AG04450 (cell line): ENCODE measurements at regions of chr4 and their contacts with region 1.

Region 1: DNA sequence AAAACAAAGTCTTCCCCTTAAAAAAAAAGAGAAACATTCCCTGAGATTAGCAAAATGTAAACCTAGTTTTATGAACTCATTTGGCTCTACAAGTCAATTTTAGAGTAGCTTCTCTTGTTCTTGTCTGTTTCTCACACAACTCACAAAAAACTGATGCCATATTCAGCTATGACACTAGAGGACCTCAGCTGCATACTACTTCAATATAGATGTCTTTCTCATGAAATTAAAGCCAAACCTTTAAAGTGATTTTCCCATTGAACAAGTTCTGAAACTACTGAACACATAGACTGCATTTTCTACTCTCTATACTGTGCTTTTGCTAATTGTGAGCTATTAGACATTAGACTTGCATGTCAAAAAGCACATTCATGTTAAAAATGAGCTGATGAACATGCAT is 49.8 kb downstream of the TBCK start:
- DNase-seq: peak; percentile 18
- H3K4me3 ChIP-seq: no peak overlapping the region
- H3K27ac ChIP-seq: no peak overlapping the region
- H3K27me3 ChIP-seq: no peaks in the 10 kb centered on the region
- CTCF ChIP-seq: peak; percentile 76

Region 2: GRCh38 chr4:106287353-106287969 is 21.3 kb after region 1 on chr4:
- CTCF ChIA-PET with region 1: interaction called, 11 read pairs
- POLR2A ChIA-PET with region 1: no interaction called
- DNase-seq: peak; percentile 67
- H3K4me3 ChIP-seq: no peak overlapping the region
- H3K27ac ChIP-seq: no peak overlapping the region
- H3K27me3 ChIP-seq: no peaks in the 10 kb centered on the region
- CTCF ChIP-seq: no peak

Region 3: DNA sequence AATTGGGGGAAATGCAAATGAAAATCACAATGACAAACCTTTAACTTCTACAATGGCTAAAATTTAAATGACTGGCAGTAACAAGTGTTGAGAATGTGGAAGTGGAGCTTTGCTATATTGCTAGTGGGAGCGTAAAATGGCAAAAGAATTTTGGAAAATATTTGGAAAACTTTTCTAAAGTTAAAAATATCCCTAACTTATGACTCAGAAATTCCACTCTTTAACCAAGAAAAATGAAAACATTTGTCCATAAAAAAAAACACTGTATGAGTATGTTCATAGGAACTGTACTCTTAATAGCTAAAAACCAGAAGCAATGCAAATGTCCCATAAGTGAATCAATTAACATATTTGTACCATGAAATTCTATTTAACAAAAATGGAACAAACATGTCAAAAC is 46.2 kb after region 1 on chr4:
- CTCF ChIA-PET with region 1: interaction called, 14 read pairs
- POLR2A ChIA-PET with region 1: interaction called, 3 read pairs
- DNase-seq: no peak
- H3K4me3 ChIP-seq: no peak overlapping the region
- H3K27ac ChIP-seq: no peak overlapping the region
- H3K27me3 ChIP-seq: no peaks in the 10 kb centered on the region
- CTCF ChIP-seq: no peak

Region 4: GRCh38 chr4:106329041-106329618 is 62.9 kb after region 1 on chr4:
- CTCF ChIA-PET with region 1: interaction called, 27 read pairs
- POLR2A ChIA-PET with region 1: no interaction called
- DNase-seq: peak; percentile 21
- H3K4me3 ChIP-seq: no peak overlapping the region
- H3K27ac ChIP-seq: no peak overlapping the region
- H3K27me3 ChIP-seq: no peaks in the 10 kb centered on the region
- CTCF ChIP-seq: peak; percentile 77

Region 5: GRCh38 chr4:106502106-106502699 is 236.0 kb after region 1 on chr4:
- CTCF ChIA-PET with region 1: interaction called, 36 read pairs
- POLR2A ChIA-PET with region 1: no interaction called
- DNase-seq: peak; percentile 7
- H3K4me3 ChIP-seq: no peak overlapping the region
- H3K27ac ChIP-seq: no peak overlapping the region
- H3K27me3 ChIP-seq: no peaks in the 10 kb centered on the region
- CTCF ChIP-seq: peak; percentile 84